ENCODE measurements at regions of chr22 and their contacts with region 1.

Region 1: DNA sequence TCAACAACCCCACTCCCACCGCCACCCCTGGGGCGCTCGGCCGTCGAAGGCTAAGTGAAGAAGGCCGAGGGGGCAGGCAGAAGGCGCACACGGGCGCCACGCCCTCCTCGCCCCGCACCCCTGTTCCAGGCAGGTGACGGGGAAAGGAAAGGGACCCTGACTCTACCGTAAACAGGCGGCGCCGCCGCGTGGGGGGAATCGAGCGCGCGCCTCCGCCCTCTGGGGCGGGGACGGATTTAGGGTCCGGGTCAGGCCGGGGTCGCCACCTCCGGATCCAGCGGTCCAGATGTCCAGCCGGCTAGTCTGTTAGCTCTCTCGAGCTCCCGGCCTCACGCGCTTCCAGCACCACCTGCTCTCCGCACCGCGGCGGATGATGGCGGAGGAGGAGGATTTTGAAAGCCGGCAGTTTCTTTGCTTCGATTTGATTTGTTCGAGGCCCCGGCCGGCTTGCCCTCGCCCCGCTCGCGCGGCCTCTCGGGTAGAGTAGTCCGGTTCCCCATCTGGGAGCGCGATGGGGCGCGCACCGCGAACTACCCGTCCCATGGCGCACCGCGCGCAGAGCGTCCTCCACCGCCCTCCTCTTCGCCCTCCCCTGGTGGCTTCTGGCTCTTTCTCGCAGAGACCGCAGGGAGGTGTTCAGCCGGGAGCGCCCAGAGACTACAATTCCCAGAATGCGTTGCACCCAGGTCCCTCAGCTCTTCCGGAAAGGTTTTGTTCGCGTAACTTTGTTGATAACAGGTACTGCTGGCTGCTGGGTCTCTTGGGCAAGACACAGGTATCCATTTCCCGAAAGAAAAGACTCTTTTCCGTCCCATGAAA is at the start of gene RANGAP1:
- DNase-seq: peak; percentile 96 to 100 (median 98)
- ATAC-seq: peak; percentile 86
- H3K4me3 ChIP-seq: peak within 1 kb of the TSS; percentile 76 to 99
- H3K4me3 Mint-ChIP-seq: peak within 1 kb of the TSS; percentile 92
- H3K27ac ChIP-seq: peak within 1 kb of the TSS; percentile 87 to 95
- H3K27ac Mint-ChIP-seq: peak within 1 kb of the TSS; percentile 98
- H3K4me1 ChIP-seq: peaks cover 15% of the 10 kb centered on the region
- H3K4me1 Mint-ChIP-seq: peaks cover 32% of the 10 kb centered on the region
- H3K27me3 ChIP-seq: no peaks in the 10 kb centered on the region
- H3K27me3 Mint-ChIP-seq: no peaks in the 10 kb centered on the region
- CTCF ChIP-seq: no peak
- total RNA-seq, gene RANGAP1: 200 to 210 TPM

Region 2: GRCh38 chr22:40856513-40857308 is 429.3 kb before region 1 on chr22 and contains the starts of genes ST13 and XPNPEP3:
- CTCF ChIA-PET with region 1: no interaction called
- POLR2A ChIA-PET with region 1: interaction called, 7 read pairs
- intact Hi-C with region 1: loop called in 1 of 2 experiments (anchors 1 kb)
- DNase-seq: peak; percentile 92 to 98 (median 97)
- ATAC-seq: peak; percentile 88
- H3K4me3 ChIP-seq: peak within 1 kb of the TSS; percentile 85 to 97
- H3K4me3 Mint-ChIP-seq: peak within 1 kb of the TSS; percentile 98
- H3K27ac ChIP-seq: peak within 1 kb of the TSS; percentile 97 to 99
- H3K27ac Mint-ChIP-seq: peak within 1 kb of the TSS; percentile 100
- H3K4me1 ChIP-seq: peaks cover 40% of the 10 kb centered on the region
- H3K4me1 Mint-ChIP-seq: peaks cover 65% of the 10 kb centered on the region
- H3K27me3 ChIP-seq: no peaks in the 10 kb centered on the region
- H3K27me3 Mint-ChIP-seq: no peaks in the 10 kb centered on the region
- CTCF ChIP-seq: peak; percentile 42
- total RNA-seq, gene ST13: 143 to 160 TPM
- total RNA-seq, gene XPNPEP3: 13.9 to 15.2 TPM

Region 3: DNA sequence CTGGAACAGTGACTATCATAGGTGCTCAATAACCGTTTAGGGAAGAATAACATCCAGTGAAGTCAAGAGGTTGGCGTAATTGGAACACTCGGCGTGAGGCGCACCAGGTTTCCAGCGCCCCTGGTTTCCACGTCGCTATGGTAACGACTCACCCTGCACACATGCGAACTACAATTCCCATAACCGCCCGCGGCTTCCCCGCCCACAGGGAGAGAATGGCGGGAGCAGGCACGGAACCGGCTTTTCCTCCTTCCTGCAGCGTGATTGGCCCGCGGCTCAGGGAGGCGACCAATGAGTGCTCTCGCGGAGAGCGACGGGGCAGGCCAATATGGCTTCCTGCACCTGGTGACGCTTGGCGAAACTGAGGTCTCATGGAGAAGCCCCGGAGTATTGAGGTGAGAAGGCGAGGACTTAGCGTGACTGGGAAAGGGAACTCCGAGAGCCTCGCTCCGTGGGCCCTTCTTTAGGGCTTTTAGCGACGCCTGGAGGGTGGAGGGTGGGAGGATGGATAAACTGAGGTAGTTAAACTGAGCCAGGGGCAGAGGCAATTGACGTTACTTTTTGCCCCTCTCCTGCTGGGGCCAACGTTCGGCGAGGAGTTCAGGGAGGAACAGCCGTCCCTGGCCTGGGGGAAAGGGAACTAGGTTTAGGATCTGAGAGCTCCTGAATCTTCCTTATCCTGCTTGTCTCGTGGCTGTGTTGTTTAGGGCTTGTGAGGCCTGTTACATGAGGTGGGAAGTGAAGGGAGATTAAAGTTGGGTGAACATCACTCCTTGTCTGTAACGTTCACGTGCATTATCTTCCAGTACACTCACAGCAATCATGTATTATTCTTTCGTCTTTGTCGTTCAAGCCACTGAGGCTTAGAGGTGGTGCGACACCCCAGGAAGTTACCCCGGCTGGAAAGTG is 80.8 kb before region 1 on chr22 and contains the start of gene L3MBTL2:
- CTCF ChIA-PET with region 1: no interaction called
- POLR2A ChIA-PET with region 1: no interaction called
- intact Hi-C with region 1: loop called (anchors 1 kb)
- DNase-seq: peak; percentile 96 to 99 (median 98)
- ATAC-seq: peak; percentile 100
- H3K4me3 ChIP-seq: peak within 1 kb of the TSS; percentile 77 to 83
- H3K4me3 Mint-ChIP-seq: peak within 1 kb of the TSS; percentile 97
- H3K27ac ChIP-seq: peak within 1 kb of the TSS; percentile 60 to 83
- H3K27ac Mint-ChIP-seq: peak within 1 kb of the TSS; percentile 96
- H3K4me1 ChIP-seq: peaks cover 9% of the 10 kb centered on the region
- H3K4me1 Mint-ChIP-seq: peaks cover 32% of the 10 kb centered on the region
- H3K27me3 ChIP-seq: peaks cover 0 to 2% of the 10 kb centered on the region in 2 experiments
- H3K27me3 Mint-ChIP-seq: peaks cover 9% of the 10 kb centered on the region
- CTCF ChIP-seq: no peak
- total RNA-seq, gene L3MBTL2: 16.3 to 20.3 TPM

Region 4: GRCh38 chr22:41301105-41302020 is 15.3 kb after region 1 on chr22 and contains the start of gene ZC3H7B:
- CTCF ChIA-PET with region 1: interaction called, 12 read pairs
- POLR2A ChIA-PET with region 1: interaction called, 58 read pairs
- intact Hi-C with region 1: loop called in 1 of 2 experiments (anchors 1 kb)
- DNase-seq: peak; percentile 64 to 94 (median 81)
- ATAC-seq: peak; percentile 93
- H3K4me3 ChIP-seq: peak within 1 kb of the TSS; percentile 81 to 96
- H3K4me3 Mint-ChIP-seq: peak within 1 kb of the TSS; percentile 83
- H3K27ac ChIP-seq: peak within 1 kb of the TSS; percentile 72 to 80
- H3K27ac Mint-ChIP-seq: peak within 1 kb of the TSS; percentile 95
- H3K4me1 ChIP-seq: peaks cover 16% of the 10 kb centered on the region
- H3K4me1 Mint-ChIP-seq: peaks cover 29% of the 10 kb centered on the region
- H3K27me3 ChIP-seq: no peaks in the 10 kb centered on the region
- H3K27me3 Mint-ChIP-seq: no peaks in the 10 kb centered on the region
- CTCF ChIP-seq: peak; percentile 43
- total RNA-seq, gene ZC3H7B: 30.7 to 30.8 TPM

Region 5: DNA sequence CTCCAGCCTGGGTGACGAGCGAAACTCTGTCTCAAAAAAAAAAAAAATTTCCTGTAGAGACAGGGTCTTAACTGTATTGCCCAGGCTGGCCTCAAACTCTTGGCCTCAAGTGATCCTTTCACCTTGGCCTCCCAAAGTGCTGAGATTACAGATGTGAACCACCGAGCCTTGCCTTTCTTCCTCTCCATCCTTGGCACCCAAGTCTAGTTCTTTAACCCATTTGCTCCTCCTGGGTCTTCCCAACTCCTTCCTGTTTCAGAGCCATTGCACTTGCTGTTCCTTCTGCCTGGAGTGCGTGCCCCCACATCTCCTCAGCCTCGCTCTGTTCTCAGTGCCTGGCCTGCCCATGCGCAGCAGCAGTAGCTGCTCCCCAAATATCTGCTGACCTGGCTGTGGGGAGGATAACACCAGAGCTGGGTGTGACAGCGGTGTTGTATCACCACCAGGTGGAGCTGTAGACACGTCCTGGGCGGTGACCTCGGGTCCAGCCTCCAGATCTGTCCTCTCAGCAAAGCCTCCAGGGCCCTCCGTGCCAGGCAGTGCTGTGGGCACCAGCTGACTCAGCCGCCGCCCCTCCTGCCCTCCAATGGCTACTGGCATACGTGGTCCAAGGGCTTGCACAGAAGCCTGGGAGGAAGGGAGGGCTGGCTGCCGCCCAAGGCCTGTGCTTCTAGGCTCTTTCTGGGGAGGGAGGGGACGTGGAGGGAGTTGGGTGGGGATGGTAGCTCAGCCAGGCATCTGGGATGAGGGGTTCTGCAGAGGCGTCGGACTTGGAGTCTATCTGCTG is 117.7 kb after region 1 on chr22:
- CTCF ChIA-PET with region 1: no interaction called
- POLR2A ChIA-PET with region 1: no interaction called
- intact Hi-C with region 1: no loop called
- DNase-seq: peak; percentile 60 to 90 (median 81)
- ATAC-seq: peak; percentile 99
- H3K4me3 ChIP-seq: no peak overlapping the region
- H3K4me3 Mint-ChIP-seq: no peak overlapping the region
- H3K27ac ChIP-seq: no peak overlapping the region
- H3K27ac Mint-ChIP-seq: no peak overlapping the region
- H3K4me1 ChIP-seq: peaks cover 13% of the 10 kb centered on the region
- H3K4me1 Mint-ChIP-seq: peaks cover 11% of the 10 kb centered on the region
- H3K27me3 ChIP-seq: no peaks in the 10 kb centered on the region
- H3K27me3 Mint-ChIP-seq: no peaks in the 10 kb centered on the region
- CTCF ChIP-seq: peak; percentile 93

Region 6: GRCh38 chr22:41543854-41544670 is 258.0 kb after region 1 on chr22 and contains the start of gene POLR3H:
- CTCF ChIA-PET with region 1: no interaction called
- POLR2A ChIA-PET with region 1: no interaction called
- intact Hi-C with region 1: loop called (anchors 1 to 2 kb)
- DNase-seq: peak; percentile 92 to 99 (median 97)
- ATAC-seq: peak; percentile 98
- H3K4me3 ChIP-seq: peak within 1 kb of the TSS; percentile 75 to 95
- H3K4me3 Mint-ChIP-seq: peak within 1 kb of the TSS; percentile 98
- H3K27ac ChIP-seq: peak within 1 kb of the TSS; percentile 82 to 83
- H3K27ac Mint-ChIP-seq: peak within 1 kb of the TSS; percentile 94
- H3K4me1 ChIP-seq: peaks cover 30% of the 10 kb centered on the region
- H3K4me1 Mint-ChIP-seq: peaks cover 40% of the 10 kb centered on the region
- H3K27me3 ChIP-seq: no peaks in the 10 kb centered on the region
- H3K27me3 Mint-ChIP-seq: no peaks in the 10 kb centered on the region
- CTCF ChIP-seq: no peak
- total RNA-seq, gene POLR3H: 11.2 to 11.7 TPM

Region 7: GRCh38 chr22:42444077-42444904 is 1158.3 kb after region 1 on chr22:
- CTCF ChIA-PET with region 1: no interaction called
- POLR2A ChIA-PET with region 1: interaction called, 5 read pairs
- intact Hi-C with region 1: loop called in 1 of 2 experiments (anchors 5 kb)
- DNase-seq: peak; percentile 58 to 91 (median 78)
- ATAC-seq: peak; percentile 95
- H3K4me3 ChIP-seq: peak overlapping the region; percentile 45 to 47
- H3K4me3 Mint-ChIP-seq: peak overlapping the region; percentile 81
- H3K27ac ChIP-seq: peak overlapping the region; percentile 38 to 58
- H3K27ac Mint-ChIP-seq: peak overlapping the region; percentile 92
- H3K4me1 ChIP-seq: peaks cover 11% of the 10 kb centered on the region
- H3K4me1 Mint-ChIP-seq: peaks cover 22% of the 10 kb centered on the region
- H3K27me3 ChIP-seq: no peaks in the 10 kb centered on the region
- H3K27me3 Mint-ChIP-seq: no peaks in the 10 kb centered on the region
- CTCF ChIP-seq: peak; percentile 36

Measured in CD8-positive, alpha-beta T cell (primary cell).